ENCODE measurements at regions of chr5 and their contacts with region 1.

Region 1: GRCh38 chr5:137665678-137666460 is 70.0 kb downstream of the KLHL3 start:
- DNase-seq: peak; percentile 41 to 52 (median 49)
- H3K4me3 ChIP-seq: no peak overlapping the region
- H3K4me3 Mint-ChIP-seq: peak overlapping the region in 2 of 8 donors; percentile 12 to 59
- H3K27ac ChIP-seq: no peak overlapping the region
- H3K27ac Mint-ChIP-seq: peak overlapping the region; percentile 5 to 74 (median 37)
- H3K4me1 ChIP-seq: peaks cover 13% of the 10 kb centered on the region
- H3K4me1 Mint-ChIP-seq: peaks cover 11 to 20% (median 14%) of the 10 kb centered on the region in 4 donors
- H3K27me3 ChIP-seq: no peaks in the 10 kb centered on the region
- H3K27me3 Mint-ChIP-seq: no peaks in the 10 kb centered on the region

Region 2: DNA sequence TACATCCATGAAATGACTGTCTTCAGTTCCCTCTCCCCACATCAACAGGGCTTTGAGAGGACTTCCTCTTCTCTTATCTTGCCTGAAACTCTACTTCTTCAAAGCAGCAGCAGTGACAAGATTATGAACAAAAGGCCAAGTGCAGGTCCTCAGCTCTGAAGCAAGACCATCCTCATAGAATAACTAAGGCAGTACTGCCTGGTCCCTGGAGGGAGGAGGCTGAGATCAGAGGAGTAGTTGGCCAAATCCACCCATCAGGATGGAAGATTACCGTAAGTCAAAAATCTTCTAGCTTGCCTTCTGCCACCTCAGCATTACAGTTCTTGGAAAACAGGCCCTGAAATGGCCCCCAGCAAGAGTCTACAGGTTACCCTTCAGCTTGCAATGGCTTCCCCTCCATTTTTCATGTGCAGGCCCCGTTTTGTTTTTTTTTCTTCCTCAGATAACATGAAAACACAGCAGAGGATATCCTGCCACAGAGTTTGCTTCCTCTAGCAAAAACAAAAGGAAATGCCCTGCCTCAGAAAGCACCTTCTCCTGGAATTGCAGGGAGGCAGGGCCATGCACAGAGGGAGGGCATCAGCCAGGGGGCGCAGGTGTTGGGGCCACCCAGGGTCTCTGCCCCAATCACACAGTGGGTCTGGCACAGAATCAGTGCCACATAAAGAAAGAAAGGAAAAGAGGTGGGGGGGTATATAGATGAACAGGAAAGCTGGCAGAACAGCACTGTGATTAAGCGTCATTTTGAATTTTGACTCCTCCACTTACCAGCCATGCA is 30.0 kb after region 1 on chr5:
- CTCF ChIA-PET with region 1: interaction called, 71 read pairs
- POLR2A ChIA-PET with region 1: interaction called, 38 read pairs
- intact Hi-C with region 1: loop called (anchors 2 kb)
- DNase-seq: peak; percentile 42 to 66 (median 52)
- H3K4me3 ChIP-seq: peak overlapping the region in 1 of 2 donors; percentile 9
- H3K4me3 Mint-ChIP-seq: peak overlapping the region; percentile 69 to 89 (median 81)
- H3K27ac ChIP-seq: peak overlapping the region; percentile 4
- H3K27ac Mint-ChIP-seq: peak overlapping the region; percentile 86 to 96 (median 92)
- H3K4me1 ChIP-seq: peaks cover 47% of the 10 kb centered on the region
- H3K4me1 Mint-ChIP-seq: peaks cover 34 to 68% (median 56%) of the 10 kb centered on the region in 4 donors
- H3K27me3 ChIP-seq: no peaks in the 10 kb centered on the region
- H3K27me3 Mint-ChIP-seq: no peaks in the 10 kb centered on the region

Region 3: GRCh38 chr5:137706841-137707240 is 41.0 kb after region 1 on chr5:
- CTCF ChIA-PET with region 1: no interaction called
- POLR2A ChIA-PET with region 1: no interaction called
- intact Hi-C with region 1: no loop called
- DNase-seq: no peak
- H3K4me3 ChIP-seq: no peak overlapping the region
- H3K4me3 Mint-ChIP-seq: no peak overlapping the region
- H3K27ac ChIP-seq: no peak overlapping the region
- H3K27ac Mint-ChIP-seq: no peak overlapping the region
- H3K4me1 ChIP-seq: no peaks in the 10 kb centered on the region
- H3K4me1 Mint-ChIP-seq: peaks cover 0 to 11% (median 3%) of the 10 kb centered on the region in 4 donors
- H3K27me3 ChIP-seq: no peaks in the 10 kb centered on the region
- H3K27me3 Mint-ChIP-seq: no peaks in the 10 kb centered on the region

Region 4: GRCh38 chr5:137735555-137736284 is 69.9 kb after region 1 on chr5 and contains the start of gene KLHL3:
- CTCF ChIA-PET with region 1: interaction called, 653 read pairs
- POLR2A ChIA-PET with region 1: interaction called, 31 read pairs
- intact Hi-C with region 1: no loop called
- DNase-seq: peak in 4 of 5 donors; percentile 26 to 39 (median 28)
- H3K4me3 ChIP-seq: peak within 1 kb of the TSS; percentile 61 to 73
- H3K4me3 Mint-ChIP-seq: no peak within 1 kb of the TSS
- H3K27ac ChIP-seq: peak within 1 kb of the TSS; percentile 36
- H3K27ac Mint-ChIP-seq: no peak within 1 kb of the TSS
- H3K4me1 ChIP-seq: peaks cover 68% of the 10 kb centered on the region
- H3K4me1 Mint-ChIP-seq: peaks cover 13 to 20% (median 14%) of the 10 kb centered on the region in 4 donors
- H3K27me3 ChIP-seq: no peaks in the 10 kb centered on the region
- H3K27me3 Mint-ChIP-seq: no peaks in the 10 kb centered on the region
- total RNA-seq, gene KLHL3: 22.0 to 25.9 TPM

Measured in CD4-positive, alpha-beta memory T cell (primary cell).